Endothelial cell of umbilical vein (primary cell): ENCODE measurements at regions of chr12 and their contacts with region 1.

Region 1: GRCh38 chr12:10016881-10017280 is 6.5 kb downstream of the CLEC12B start:
- DNase-seq: peak; percentile 86
- H3K4me3 ChIP-seq: no peak overlapping the region
- H3K27ac ChIP-seq: peak overlapping the region; percentile 99
- H3K4me1 ChIP-seq: peaks cover 27% of the 10 kb centered on the region
- H3K27me3 ChIP-seq: no peaks in the 10 kb centered on the region
- CTCF ChIP-seq: no peak
- POLR2A ChIP-seq: no peak

Region 2: GRCh38 chr12:9869307-9870161 is 147.3 kb before region 1 on chr12 and contains the start of gene CLEC2B:
- CTCF ChIA-PET with region 1: interaction called, 3 read pairs
- POLR2A ChIA-PET with region 1: no interaction called
- dilution Hi-C with region 1: no loop called
- intact Hi-C with region 1: loop called (anchors 5 kb)
- DNase-seq: peak; percentile 92
- H3K4me3 ChIP-seq: peak within 1 kb of the TSS; percentile 28 to 93 (median 73)
- H3K27ac ChIP-seq: peak within 1 kb of the TSS; percentile 96
- H3K4me1 ChIP-seq: peaks cover 31% of the 10 kb centered on the region
- H3K27me3 ChIP-seq: no peaks in the 10 kb centered on the region
- CTCF ChIP-seq: no peak
- POLR2A ChIP-seq: peak; percentile 60
- total RNA-seq, gene CLEC2B: 16.4 and 18.3 TPM in 2 replicates